T-cell (primary cell): ENCODE measurements at regions of chr7 and their contacts with region 1.

Region 1: GRCh38 chr7:83970081-83970480 is 224.5 kb downstream of the SEMA3A start:
- DNase-seq: no peak
- ATAC-seq: no peak
- H3K4me3 ChIP-seq: no peak overlapping the region
- H3K4me3 Mint-ChIP-seq: no peak overlapping the region
- H3K27ac ChIP-seq: no peak overlapping the region
- H3K27ac Mint-ChIP-seq: no peak overlapping the region
- H3K4me1 ChIP-seq: no peaks in the 10 kb centered on the region
- H3K4me1 Mint-ChIP-seq: no peaks in the 10 kb centered on the region
- H3K27me3 ChIP-seq: no peaks in the 10 kb centered on the region
- H3K27me3 Mint-ChIP-seq: no peaks in the 10 kb centered on the region

Region 2: DNA sequence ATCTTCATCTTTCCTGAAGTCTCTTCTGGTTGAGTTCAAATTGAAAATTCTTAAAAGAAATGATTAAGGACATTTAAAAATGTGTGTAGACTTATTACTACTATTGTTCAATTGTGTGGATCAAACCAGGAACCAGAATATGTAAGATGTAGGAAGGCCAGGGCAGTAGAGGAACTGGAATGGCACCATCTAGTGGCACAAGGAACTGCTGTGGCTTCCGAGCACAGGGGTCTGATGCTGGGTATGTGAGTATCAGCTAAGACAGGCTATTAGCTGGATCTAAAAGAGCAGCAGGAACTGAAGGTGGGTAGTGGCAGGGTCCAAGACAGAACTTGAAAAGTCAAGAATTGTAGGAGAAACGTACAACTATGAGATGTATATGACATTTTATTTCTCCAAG is 22.8 kb before region 1 on chr7:
- CTCF ChIA-PET with region 1: interaction called, 3 to 11 read pairs
- POLR2A ChIA-PET with region 1: no interaction called
- DNase-seq: peak in 1 of 35 experiments; percentile 3
- ATAC-seq: no peak
- H3K4me3 ChIP-seq: no peak overlapping the region
- H3K4me3 Mint-ChIP-seq: no peak overlapping the region
- H3K27ac ChIP-seq: no peak overlapping the region
- H3K27ac Mint-ChIP-seq: no peak overlapping the region
- H3K4me1 ChIP-seq: no peaks in the 10 kb centered on the region
- H3K4me1 Mint-ChIP-seq: no peaks in the 10 kb centered on the region
- H3K27me3 ChIP-seq: no peaks in the 10 kb centered on the region
- H3K27me3 Mint-ChIP-seq: peaks cover 0 to 5% of the 10 kb centered on the region in 2 donors